ENCODE measurements at regions of chr1 and their contacts with region 1.

Region 1: GRCh38 chr1:9494929-9495758 is 44.1 kb upstream of the SLC25A33 start:
- DNase-seq: peak; percentile 33 to 82 (median 65)
- ATAC-seq: peak; percentile 83
- H3K4me3 ChIP-seq: peak overlapping the region; percentile 39 to 43
- H3K4me3 Mint-ChIP-seq: peak overlapping the region; percentile 67
- H3K27ac ChIP-seq: no peak overlapping the region
- H3K27ac Mint-ChIP-seq: no peak overlapping the region
- H3K4me1 ChIP-seq: peaks cover 8% of the 10 kb centered on the region
- H3K4me1 Mint-ChIP-seq: peaks cover 5% of the 10 kb centered on the region
- H3K27me3 ChIP-seq: no peaks in the 10 kb centered on the region
- H3K27me3 Mint-ChIP-seq: peaks cover 10% of the 10 kb centered on the region
- CTCF ChIP-seq: peak; percentile 93

Region 2: GRCh38 chr1:9110669-9111356 is 384.3 kb before region 1 on chr1:
- CTCF ChIA-PET with region 1: interaction called, 6 read pairs
- POLR2A ChIA-PET with region 1: no interaction called
- intact Hi-C with region 1: loop called in 1 of 2 experiments (anchors 1 kb)
- DNase-seq: peak; percentile 72 to 89 (median 84)
- ATAC-seq: peak; percentile 89
- H3K4me3 ChIP-seq: no peak overlapping the region
- H3K4me3 Mint-ChIP-seq: no peak overlapping the region
- H3K27ac ChIP-seq: no peak overlapping the region
- H3K27ac Mint-ChIP-seq: no peak overlapping the region
- H3K4me1 ChIP-seq: no peaks in the 10 kb centered on the region
- H3K4me1 Mint-ChIP-seq: no peaks in the 10 kb centered on the region
- H3K27me3 ChIP-seq: no peaks in the 10 kb centered on the region
- H3K27me3 Mint-ChIP-seq: no peaks in the 10 kb centered on the region
- CTCF ChIP-seq: peak; percentile 84

Region 3: GRCh38 chr1:9267352-9267686 is 227.8 kb before region 1 on chr1:
- CTCF ChIA-PET with region 1: interaction called, 13 read pairs
- POLR2A ChIA-PET with region 1: no interaction called
- intact Hi-C with region 1: loop called (anchors 1 kb)
- DNase-seq: no peak
- ATAC-seq: no peak
- H3K4me3 ChIP-seq: no peak overlapping the region
- H3K4me3 Mint-ChIP-seq: no peak overlapping the region
- H3K27ac ChIP-seq: no peak overlapping the region
- H3K27ac Mint-ChIP-seq: no peak overlapping the region
- H3K4me1 ChIP-seq: no peaks in the 10 kb centered on the region
- H3K4me1 Mint-ChIP-seq: peaks cover 9% of the 10 kb centered on the region
- H3K27me3 ChIP-seq: no peaks in the 10 kb centered on the region
- H3K27me3 Mint-ChIP-seq: no peaks in the 10 kb centered on the region
- CTCF ChIP-seq: no peak

Region 4: DNA sequence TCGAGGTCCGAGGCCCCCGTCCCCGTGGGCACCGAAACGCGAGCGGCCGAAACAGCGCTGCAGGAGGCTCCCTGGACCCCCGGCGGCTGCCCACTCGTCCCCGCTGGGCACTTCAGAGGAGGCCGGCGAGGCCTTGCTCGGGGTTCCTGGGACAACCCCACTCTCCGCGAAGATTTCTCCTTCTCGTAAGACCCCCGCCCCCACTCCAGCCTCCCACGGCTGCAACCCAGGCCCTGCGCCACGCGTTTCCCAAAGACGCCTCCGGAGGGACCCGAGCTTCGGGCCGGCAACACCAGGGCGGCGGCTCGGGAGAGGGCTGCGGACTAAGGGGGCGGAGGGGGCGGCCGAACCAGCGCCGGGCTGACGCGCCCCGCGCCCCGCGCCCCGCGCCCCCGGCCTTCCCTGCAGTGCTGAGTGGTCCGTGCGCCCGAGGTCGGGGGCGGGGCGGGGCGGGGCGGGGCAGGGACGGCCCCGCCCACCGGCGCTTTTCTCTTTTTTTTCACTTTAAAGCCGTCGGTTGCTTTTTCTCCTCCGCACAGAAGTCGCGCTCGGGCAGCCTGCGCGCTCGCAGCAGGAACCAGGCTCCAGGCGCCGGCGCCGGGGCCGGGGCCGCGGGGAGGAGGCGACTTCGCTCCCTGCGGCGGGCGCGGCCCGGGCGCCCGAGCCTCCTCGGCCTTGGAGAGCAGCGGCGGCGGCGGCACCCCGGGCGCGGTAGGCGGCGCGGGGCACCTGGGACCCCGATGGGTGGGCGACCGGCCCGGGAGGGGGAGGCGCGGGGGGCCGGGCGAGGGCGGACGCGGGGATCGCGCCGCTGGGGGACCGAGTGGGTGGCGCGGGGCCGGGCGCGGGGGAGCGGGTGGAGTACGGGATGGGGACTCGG is 202.5 kb before region 1 on chr1 and contains the start of gene SPSB1:
- CTCF ChIA-PET with region 1: interaction called, 117 read pairs
- POLR2A ChIA-PET with region 1: interaction called, 5 read pairs
- intact Hi-C with region 1: loop called (anchors 1 kb)
- DNase-seq: peak; percentile 33 to 83 (median 66)
- ATAC-seq: peak; percentile 68
- H3K4me3 ChIP-seq: peak within 1 kb of the TSS; percentile 45 to 61
- H3K4me3 Mint-ChIP-seq: peak within 1 kb of the TSS; percentile 73
- H3K27ac ChIP-seq: no peak within 1 kb of the TSS
- H3K27ac Mint-ChIP-seq: no peak within 1 kb of the TSS
- H3K4me1 ChIP-seq: peaks cover 17% of the 10 kb centered on the region
- H3K4me1 Mint-ChIP-seq: peaks cover 10% of the 10 kb centered on the region
- H3K27me3 ChIP-seq: peaks cover 0 to 4% of the 10 kb centered on the region in 2 experiments
- H3K27me3 Mint-ChIP-seq: no peaks in the 10 kb centered on the region
- CTCF ChIP-seq: no peak
- total RNA-seq, gene SPSB1: 1.6 to 2.2 TPM

Region 5: DNA sequence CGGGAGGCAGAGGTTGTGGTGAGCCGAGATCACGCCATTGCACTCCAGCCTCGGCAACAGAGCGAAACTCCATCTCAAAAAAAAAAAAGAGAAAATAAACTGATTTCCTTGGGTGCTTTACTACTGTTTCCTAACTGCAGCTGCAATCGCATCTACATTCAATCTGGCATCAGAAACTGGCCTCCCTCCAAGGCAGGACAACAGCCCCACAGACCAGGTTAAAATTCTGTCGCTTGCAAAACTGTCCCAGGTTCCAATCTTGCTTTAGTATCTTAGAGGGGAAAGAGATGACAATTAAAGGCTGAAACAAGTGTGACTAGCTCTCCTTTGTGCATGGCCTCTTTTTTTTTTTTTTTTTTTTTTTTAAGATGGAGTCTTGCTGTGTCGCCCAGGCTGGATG is 11.8 kb after region 1 on chr1:
- CTCF ChIA-PET with region 1: interaction called, 15 read pairs
- POLR2A ChIA-PET with region 1: no interaction called
- intact Hi-C with region 1: no loop called
- DNase-seq: no peak
- ATAC-seq: no peak
- H3K4me3 ChIP-seq: no peak overlapping the region
- H3K4me3 Mint-ChIP-seq: no peak overlapping the region
- H3K27ac ChIP-seq: no peak overlapping the region
- H3K27ac Mint-ChIP-seq: no peak overlapping the region
- H3K4me1 ChIP-seq: no peaks in the 10 kb centered on the region
- H3K4me1 Mint-ChIP-seq: no peaks in the 10 kb centered on the region
- H3K27me3 ChIP-seq: peaks cover 0 to 2% of the 10 kb centered on the region in 2 experiments
- H3K27me3 Mint-ChIP-seq: no peaks in the 10 kb centered on the region
- CTCF ChIP-seq: no peak

Region 6: DNA sequence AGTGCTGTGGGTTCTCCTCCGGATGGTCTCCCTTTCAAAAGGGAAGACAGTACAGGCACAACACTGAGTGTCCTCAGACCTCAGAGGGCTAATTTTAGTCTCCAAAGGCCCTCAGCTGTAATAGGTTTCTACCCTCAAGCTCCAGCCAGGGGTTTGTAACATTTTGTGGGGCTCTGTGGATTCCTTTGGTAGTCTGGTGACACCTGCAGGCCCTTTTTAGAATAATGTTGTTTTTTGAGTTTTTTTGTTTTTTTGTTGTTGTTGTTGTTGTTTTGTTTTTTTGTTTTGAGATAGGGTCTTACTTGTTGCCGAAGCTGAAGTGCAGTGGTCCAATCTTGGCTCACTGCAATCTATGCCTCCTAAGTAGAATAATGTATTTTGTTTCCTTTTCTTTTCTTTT is 78.6 kb after region 1 on chr1:
- CTCF ChIA-PET with region 1: interaction called, 87 read pairs
- POLR2A ChIA-PET with region 1: no interaction called
- intact Hi-C with region 1: loop called in 1 of 2 experiments (anchors 1 kb)
- DNase-seq: peak in 2 of 9 experiments; percentile 26 to 48
- ATAC-seq: no peak
- H3K4me3 ChIP-seq: no peak overlapping the region
- H3K4me3 Mint-ChIP-seq: no peak overlapping the region
- H3K27ac ChIP-seq: no peak overlapping the region
- H3K27ac Mint-ChIP-seq: no peak overlapping the region
- H3K4me1 ChIP-seq: no peaks in the 10 kb centered on the region
- H3K4me1 Mint-ChIP-seq: no peaks in the 10 kb centered on the region
- H3K27me3 ChIP-seq: no peaks in the 10 kb centered on the region
- H3K27me3 Mint-ChIP-seq: no peaks in the 10 kb centered on the region
- CTCF ChIP-seq: no peak

Region 7: GRCh38 chr1:9629445-9630201 is 134.5 kb after region 1 on chr1:
- CTCF ChIA-PET with region 1: no interaction called
- POLR2A ChIA-PET with region 1: no interaction called
- intact Hi-C with region 1: no loop called
- DNase-seq: peak; percentile 50 to 92 (median 83)
- ATAC-seq: peak; percentile 42
- H3K4me3 ChIP-seq: peak overlapping the region; percentile 85 to 98
- H3K4me3 Mint-ChIP-seq: peak overlapping the region; percentile 98
- H3K27ac ChIP-seq: peak overlapping the region; percentile 79 to 81
- H3K27ac Mint-ChIP-seq: peak overlapping the region; percentile 98
- H3K4me1 ChIP-seq: peaks cover 66% of the 10 kb centered on the region
- H3K4me1 Mint-ChIP-seq: peaks cover 68% of the 10 kb centered on the region
- H3K27me3 ChIP-seq: no peaks in the 10 kb centered on the region
- H3K27me3 Mint-ChIP-seq: no peaks in the 10 kb centered on the region
- CTCF ChIP-seq: no peak

Region 8: GRCh38 chr1:10430216-10431069 is 935.3 kb after region 1 on chr1 and contains the start of gene CENPS:
- CTCF ChIA-PET with region 1: no interaction called
- POLR2A ChIA-PET with region 1: no interaction called
- intact Hi-C with region 1: loop called in 1 of 2 experiments (anchors 2 kb)
- DNase-seq: peak; percentile 72 to 95 (median 92)
- ATAC-seq: peak; percentile 85
- H3K4me3 ChIP-seq: peak within 1 kb of the TSS; percentile 85 to 96
- H3K4me3 Mint-ChIP-seq: peak within 1 kb of the TSS; percentile 89
- H3K27ac ChIP-seq: peak within 1 kb of the TSS; percentile 81 to 86
- H3K27ac Mint-ChIP-seq: peak within 1 kb of the TSS; percentile 91
- H3K4me1 ChIP-seq: peaks cover 18% of the 10 kb centered on the region
- H3K4me1 Mint-ChIP-seq: peaks cover 23% of the 10 kb centered on the region
- H3K27me3 ChIP-seq: no peaks in the 10 kb centered on the region
- H3K27me3 Mint-ChIP-seq: no peaks in the 10 kb centered on the region
- CTCF ChIP-seq: peak; percentile 97
- total RNA-seq, gene CENPS: 2.0 to 3.5 TPM